ENCODE measurements at regions of chr10 and their contacts with region 1.

Region 1: GRCh38 chr10:63644418-63645142 is 123.4 kb downstream of the REEP3 start:
- DNase-seq: no peak
- ATAC-seq: peak; percentile 46 to 88 (median 58)
- H3K4me3 ChIP-seq: no peak overlapping the region
- H3K27ac ChIP-seq: peak overlapping the region; percentile 58 to 93 (median 82)
- H3K4me1 ChIP-seq: peaks cover 0 to 32% (median 16%) of the 10 kb centered on the region in 12 donors
- H3K27me3 ChIP-seq: no peaks in the 10 kb centered on the region
- CTCF ChIP-seq: no peak
- POLR2A ChIP-seq: no peak

Region 2: GRCh38 chr10:63666836-63667383 is 22.3 kb after region 1 on chr10:
- intact Hi-C with region 1: loop called in 1 of 10 experiments (anchors 1 kb)
- DNase-seq: no peak
- ATAC-seq: no peak
- H3K4me3 ChIP-seq: no peak overlapping the region
- H3K27ac ChIP-seq: peak overlapping the region in 11 of 12 donors; percentile 9 to 59 (median 40)
- H3K4me1 ChIP-seq: peaks cover 3 to 44% (median 24%) of the 10 kb centered on the region in 12 donors
- H3K27me3 ChIP-seq: no peaks in the 10 kb centered on the region
- CTCF ChIP-seq: no peak
- POLR2A ChIP-seq: no peak

Region 3: GRCh38 chr10:63707254-63707910 is 62.8 kb after region 1 on chr10:
- intact Hi-C with region 1: no loop called
- DNase-seq: peak in 1 of 5 donors; percentile 39
- ATAC-seq: peak; percentile 30 to 81 (median 76)
- H3K4me3 ChIP-seq: no peak overlapping the region
- H3K27ac ChIP-seq: peak overlapping the region in 11 of 12 donors; percentile 48 to 78 (median 62)
- H3K4me1 ChIP-seq: peaks cover 17 to 74% (median 30%) of the 10 kb centered on the region in 12 donors
- H3K27me3 ChIP-seq: no peaks in the 10 kb centered on the region
- CTCF ChIP-seq: no peak
- POLR2A ChIP-seq: no peak

Region 4: GRCh38 chr10:64011912-64012714 is 367.5 kb after region 1 on chr10:
- intact Hi-C with region 1: no loop called
- DNase-seq: no peak
- ATAC-seq: no peak
- H3K4me3 ChIP-seq: no peak overlapping the region
- H3K27ac ChIP-seq: peak overlapping the region in 1 of 12 donors; percentile 1
- H3K4me1 ChIP-seq: peaks cover 0 to 4% (median 0%) of the 10 kb centered on the region in 12 donors
- H3K27me3 ChIP-seq: no peaks in the 10 kb centered on the region
- CTCF ChIP-seq: no peak
- POLR2A ChIP-seq: no peak

Region 5: DNA sequence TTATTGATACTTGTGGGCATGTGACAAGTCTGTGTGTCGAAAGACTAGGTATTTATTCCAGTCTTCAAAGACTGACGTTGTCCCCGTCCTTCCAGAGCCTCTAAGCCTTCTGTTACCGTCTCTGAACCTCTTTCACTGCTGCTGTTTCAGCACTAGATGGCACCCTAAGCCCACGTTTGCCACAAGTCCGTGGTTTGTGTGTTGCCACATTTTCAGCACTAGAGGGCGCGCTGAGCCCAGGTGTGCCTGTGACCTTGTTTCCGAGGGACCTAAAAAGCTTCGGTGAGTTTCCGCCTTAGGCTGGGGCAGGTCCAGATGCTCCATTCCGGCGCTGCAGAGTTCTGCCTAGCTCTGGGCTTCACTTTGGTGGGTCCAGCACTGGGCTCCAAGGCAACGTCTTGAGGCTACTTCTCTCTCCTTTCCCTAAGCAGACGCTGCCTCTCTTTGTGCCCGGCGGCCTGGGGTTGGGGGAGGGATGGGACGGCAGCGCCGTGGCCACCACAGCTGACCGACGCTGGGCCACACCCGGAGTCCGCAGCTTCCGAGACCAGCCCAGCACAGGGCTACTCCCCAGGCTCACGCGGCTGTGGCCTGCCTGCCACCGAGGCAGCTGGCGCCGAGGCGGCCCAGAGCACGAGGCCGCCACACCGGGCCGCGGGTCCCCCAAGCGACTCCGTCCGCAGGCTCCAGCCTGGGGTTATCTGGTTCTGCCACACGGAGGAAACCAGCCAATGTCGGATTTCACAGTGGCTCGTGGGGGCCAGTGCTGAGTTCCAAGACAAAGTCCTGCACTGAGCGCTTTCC is 396.8 kb after region 1 on chr10:
- intact Hi-C with region 1: no loop called
- DNase-seq: peak; percentile 56 to 76 (median 61)
- ATAC-seq: peak; percentile 50 to 92 (median 86)
- H3K4me3 ChIP-seq: peak overlapping the region in 10 of 12 donors; percentile 21 to 54 (median 44)
- H3K27ac ChIP-seq: no peak overlapping the region
- H3K4me1 ChIP-seq: peaks cover 0 to 26% (median 5%) of the 10 kb centered on the region in 12 donors
- H3K27me3 ChIP-seq: peaks cover 0 to 2% (median 0%) of the 10 kb centered on the region in 9 donors
- CTCF ChIP-seq: peak; percentile 92 to 99 (median 98)
- POLR2A ChIP-seq: no peak